GM10248 (cell line): ENCODE measurements at regions of chr1 and their contacts with region 1.

Region 1: DNA sequence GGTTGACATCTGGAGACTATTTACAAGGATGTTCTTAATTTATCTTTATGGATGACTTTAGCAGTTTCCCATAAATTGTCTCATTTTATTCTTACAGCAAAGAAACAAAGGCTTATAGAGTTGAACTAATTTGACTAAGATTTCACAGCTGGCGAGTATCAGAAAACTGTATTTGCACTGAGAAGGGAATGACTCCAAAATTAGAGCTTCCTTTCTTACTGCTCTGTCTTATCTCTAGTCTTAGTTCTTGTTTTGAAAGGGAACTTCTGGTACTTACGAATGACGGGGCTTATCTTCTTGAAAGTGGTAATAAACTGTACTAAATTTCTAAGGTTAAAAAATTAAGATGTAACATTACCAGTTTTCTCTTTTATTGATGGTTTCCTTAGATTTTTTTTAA is 13.6 kb downstream of the CNST start:
- DNase-seq: peak; percentile 37
- CTCF ChIP-seq: no peak

Region 2: GRCh38 chr1:246566128-246566812 is 13.5 kb before region 1 on chr1 and contains the starts of genes CNST and TFB2M:
- CTCF ChIA-PET with region 1: interaction called, 8 read pairs
- POLR2A ChIA-PET with region 1: interaction called, 11 read pairs
- DNase-seq: peak; percentile 93
- CTCF ChIP-seq: no peak

Region 3: DNA sequence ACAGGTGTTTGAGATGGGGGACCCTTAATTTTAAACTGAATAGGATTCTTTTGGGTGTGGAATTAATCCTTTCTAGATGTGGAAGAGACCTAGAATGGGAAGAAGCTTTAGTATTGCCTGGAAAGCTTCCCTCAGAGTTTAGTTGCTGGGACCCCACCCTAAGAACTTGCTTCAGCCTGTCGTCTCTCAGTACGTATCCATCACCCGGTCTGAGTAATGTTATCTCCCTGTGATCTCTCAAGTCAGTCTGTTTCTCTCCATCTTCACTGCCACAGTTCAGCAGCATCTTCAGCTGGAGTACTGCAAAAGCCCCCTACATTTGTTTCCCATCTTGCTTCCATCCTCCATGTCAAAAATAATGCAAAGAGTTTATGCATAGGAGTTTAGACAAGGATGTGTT is 15.3 kb after region 1 on chr1:
- CTCF ChIA-PET with region 1: interaction called, 12 read pairs
- POLR2A ChIA-PET with region 1: interaction called, 4 read pairs
- DNase-seq: no peak
- CTCF ChIP-seq: no peak

Region 4: GRCh38 chr1:246607423-246607822 is 27.6 kb after region 1 on chr1:
- CTCF ChIA-PET with region 1: no interaction called
- POLR2A ChIA-PET with region 1: no interaction called
- DNase-seq: no peak
- CTCF ChIP-seq: no peak